Calu3 (cell line): ENCODE measurements at regions of chr16 and their contacts with region 1.

Region 1: DNA sequence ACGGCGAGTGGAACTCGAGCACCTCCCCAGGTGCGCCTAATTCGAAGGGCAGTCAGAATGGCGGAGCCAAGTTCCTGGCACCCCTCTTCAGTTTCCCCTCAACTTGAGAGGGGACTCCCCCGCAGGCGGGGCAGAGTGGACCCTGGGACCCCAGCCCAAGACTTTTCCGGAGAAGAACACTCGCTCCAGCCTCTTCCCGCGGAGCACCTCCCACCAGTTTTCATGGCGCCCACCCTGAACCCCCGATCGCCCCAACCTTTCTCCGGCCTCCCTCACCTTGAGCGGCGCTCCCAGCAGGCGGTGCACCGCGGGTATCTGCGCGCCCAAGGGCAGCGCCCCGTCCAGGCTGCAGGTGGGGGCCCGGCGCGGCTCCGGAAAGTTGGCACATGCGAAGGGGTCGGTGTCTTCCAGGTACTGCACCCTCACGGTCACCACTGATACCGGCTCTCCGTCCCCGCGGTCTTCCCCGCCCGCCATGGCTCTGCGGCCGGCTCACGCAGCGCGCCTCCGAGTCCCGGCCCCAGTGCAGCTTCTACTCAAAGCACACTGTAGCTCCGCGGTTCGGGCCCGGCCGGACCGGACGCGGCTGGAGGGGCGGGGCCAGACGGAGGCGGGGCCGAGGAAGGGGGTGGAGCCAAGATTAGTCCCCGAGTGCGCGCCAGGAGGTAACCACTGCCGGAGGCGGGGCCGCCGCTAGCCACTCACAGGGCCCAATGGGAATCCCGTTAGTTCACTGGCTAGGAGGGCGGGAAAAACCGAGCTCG is at the start of gene FHOD1:
- DNase-seq: peak; percentile 99
- H3K4me3 Mint-ChIP-seq: peak within 1 kb of the TSS; percentile 94
- H3K27ac Mint-ChIP-seq: peak within 1 kb of the TSS; percentile 85
- H3K4me1 Mint-ChIP-seq: peaks cover 54% of the 10 kb centered on the region
- H3K27me3 Mint-ChIP-seq: peaks cover 38% of the 10 kb centered on the region
- CTCF ChIP-seq: no peak
- total RNA-seq, gene FHOD1: 37.2 and 37.9 TPM in 2 replicates

Region 2: GRCh38 chr16:67226804-67227557 is 20.1 kb before region 1 on chr16 and contains the start of gene TMEM208:
- CTCF ChIA-PET with region 1: interaction called, 9 read pairs
- intact Hi-C with region 1: loop called (anchors 2 kb)
- DNase-seq: peak; percentile 99
- H3K4me3 Mint-ChIP-seq: peak within 1 kb of the TSS; percentile 99
- H3K27ac Mint-ChIP-seq: peak within 1 kb of the TSS; percentile 99
- H3K4me1 Mint-ChIP-seq: peaks cover 40% of the 10 kb centered on the region
- H3K27me3 Mint-ChIP-seq: no peaks in the 10 kb centered on the region
- CTCF ChIP-seq: no peak
- total RNA-seq, gene TMEM208: 53.5 and 69.2 TPM in 2 replicates

Region 3: GRCh38 chr16:67284699-67285646 is 37.9 kb after region 1 on chr16:
- CTCF ChIA-PET with region 1: interaction called, 21 read pairs
- intact Hi-C with region 1: no loop called
- DNase-seq: peak; percentile 86
- H3K4me3 Mint-ChIP-seq: no peak overlapping the region
- H3K27ac Mint-ChIP-seq: no peak overlapping the region
- H3K4me1 Mint-ChIP-seq: peaks cover 9% of the 10 kb centered on the region
- H3K27me3 Mint-ChIP-seq: peaks cover 10% of the 10 kb centered on the region
- CTCF ChIP-seq: peak; percentile 85

Region 4: GRCh38 chr16:67404740-67405226 is 157.7 kb after region 1 on chr16:
- CTCF ChIA-PET with region 1: interaction called, 12 read pairs
- intact Hi-C with region 1: no loop called
- DNase-seq: peak; percentile 96
- H3K4me3 Mint-ChIP-seq: peak overlapping the region; percentile 44
- H3K27ac Mint-ChIP-seq: peak overlapping the region; percentile 99
- H3K4me1 Mint-ChIP-seq: peaks cover 49% of the 10 kb centered on the region
- H3K27me3 Mint-ChIP-seq: no peaks in the 10 kb centered on the region
- CTCF ChIP-seq: no peak